B cell (primary cell): ENCODE measurements at regions of chr9 and their contacts with region 1.

Region 1: GRCh38 chr9:105694190-105694847 is at the start of gene TMEM38B:
- DNase-seq: peak; percentile 90
- ATAC-seq: peak; percentile 83
- H3K4me3 ChIP-seq: peak within 1 kb of the TSS; percentile 75 to 93 (median 82)
- H3K4me3 Mint-ChIP-seq: peak within 1 kb of the TSS; percentile 95
- H3K27ac ChIP-seq: peak within 1 kb of the TSS; percentile 58 to 77
- H3K27ac Mint-ChIP-seq: peak within 1 kb of the TSS; percentile 92
- H3K4me1 ChIP-seq: peaks cover 17 to 18% of the 10 kb centered on the region in 2 donors
- H3K4me1 Mint-ChIP-seq: peaks cover 19% of the 10 kb centered on the region
- H3K27me3 ChIP-seq: peaks cover 0 to 14% (median 11%) of the 10 kb centered on the region in 4 experiments
- H3K27me3 Mint-ChIP-seq: peaks cover 26% of the 10 kb centered on the region
- CTCF ChIP-seq: no peak
- total RNA-seq, gene TMEM38B: 29.6 and 35.2 TPM in 2 replicates

Region 2: GRCh38 chr9:105447814-105448812 is 246.2 kb before region 1 on chr9 and contains the start of gene FSD1L:
- CTCF ChIA-PET with region 1: no interaction called
- POLR2A ChIA-PET with region 1: no interaction called
- intact Hi-C with region 1: loop called (anchors 1 kb)
- DNase-seq: peak; percentile 90
- ATAC-seq: peak; percentile 91
- H3K4me3 ChIP-seq: peak within 1 kb of the TSS in 4 of 5 experiments; percentile 69 to 83 (median 74)
- H3K4me3 Mint-ChIP-seq: peak within 1 kb of the TSS; percentile 90
- H3K27ac ChIP-seq: peak within 1 kb of the TSS; percentile 21 to 24
- H3K27ac Mint-ChIP-seq: peak within 1 kb of the TSS; percentile 89
- H3K4me1 ChIP-seq: peaks cover 9 to 11% of the 10 kb centered on the region in 2 donors
- H3K4me1 Mint-ChIP-seq: peaks cover 17% of the 10 kb centered on the region
- H3K27me3 ChIP-seq: no peaks in the 10 kb centered on the region
- H3K27me3 Mint-ChIP-seq: no peaks in the 10 kb centered on the region
- CTCF ChIP-seq: no peak
- total RNA-seq, gene FSD1L: 9.8 and 15.2 TPM in 2 replicates

Region 3: DNA sequence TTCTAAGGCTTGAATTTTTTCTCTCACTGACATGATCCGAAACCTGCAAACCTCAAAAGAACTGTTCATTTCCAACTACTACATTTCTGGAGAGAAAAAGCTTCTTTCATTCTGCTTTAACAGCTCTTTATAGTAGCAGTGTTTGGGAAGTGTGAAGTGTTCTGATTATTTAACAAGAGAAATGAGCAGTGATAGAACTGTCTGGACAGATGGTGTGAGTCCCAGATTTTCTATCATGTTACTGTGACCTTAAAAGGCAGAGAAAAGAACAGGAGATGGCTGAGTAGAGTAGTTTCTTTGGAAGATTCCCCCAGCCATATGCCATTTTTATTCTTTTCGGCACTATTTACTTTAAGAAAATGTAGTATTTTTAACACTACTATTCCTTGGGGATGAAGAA is 73.3 kb before region 1 on chr9:
- CTCF ChIA-PET with region 1: no interaction called
- POLR2A ChIA-PET with region 1: no interaction called
- intact Hi-C with region 1: no loop called
- DNase-seq: no peak
- ATAC-seq: no peak
- H3K4me3 ChIP-seq: no peak overlapping the region
- H3K4me3 Mint-ChIP-seq: no peak overlapping the region
- H3K27ac ChIP-seq: no peak overlapping the region
- H3K27ac Mint-ChIP-seq: no peak overlapping the region
- H3K4me1 ChIP-seq: no peaks in the 10 kb centered on the region
- H3K4me1 Mint-ChIP-seq: no peaks in the 10 kb centered on the region
- H3K27me3 ChIP-seq: no peaks in the 10 kb centered on the region
- H3K27me3 Mint-ChIP-seq: no peaks in the 10 kb centered on the region
- CTCF ChIP-seq: no peak

Region 4: GRCh38 chr9:105656131-105656921 is 38.0 kb before region 1 on chr9:
- CTCF ChIA-PET with region 1: interaction called, 19 read pairs
- POLR2A ChIA-PET with region 1: interaction called, 6 read pairs
- intact Hi-C with region 1: loop called (anchors 1 kb)
- DNase-seq: peak; percentile 52
- ATAC-seq: peak; percentile 80
- H3K4me3 ChIP-seq: peak overlapping the region; percentile 53 to 69 (median 63)
- H3K4me3 Mint-ChIP-seq: peak overlapping the region; percentile 91
- H3K27ac ChIP-seq: no peak overlapping the region
- H3K27ac Mint-ChIP-seq: peak overlapping the region; percentile 57
- H3K4me1 ChIP-seq: peaks cover 20 to 24% of the 10 kb centered on the region in 2 donors
- H3K4me1 Mint-ChIP-seq: peaks cover 24% of the 10 kb centered on the region
- H3K27me3 ChIP-seq: peaks cover 0 to 32% (median 20%) of the 10 kb centered on the region in 4 experiments
- H3K27me3 Mint-ChIP-seq: peaks cover 24% of the 10 kb centered on the region
- CTCF ChIP-seq: peak; percentile 35

Region 5: DNA sequence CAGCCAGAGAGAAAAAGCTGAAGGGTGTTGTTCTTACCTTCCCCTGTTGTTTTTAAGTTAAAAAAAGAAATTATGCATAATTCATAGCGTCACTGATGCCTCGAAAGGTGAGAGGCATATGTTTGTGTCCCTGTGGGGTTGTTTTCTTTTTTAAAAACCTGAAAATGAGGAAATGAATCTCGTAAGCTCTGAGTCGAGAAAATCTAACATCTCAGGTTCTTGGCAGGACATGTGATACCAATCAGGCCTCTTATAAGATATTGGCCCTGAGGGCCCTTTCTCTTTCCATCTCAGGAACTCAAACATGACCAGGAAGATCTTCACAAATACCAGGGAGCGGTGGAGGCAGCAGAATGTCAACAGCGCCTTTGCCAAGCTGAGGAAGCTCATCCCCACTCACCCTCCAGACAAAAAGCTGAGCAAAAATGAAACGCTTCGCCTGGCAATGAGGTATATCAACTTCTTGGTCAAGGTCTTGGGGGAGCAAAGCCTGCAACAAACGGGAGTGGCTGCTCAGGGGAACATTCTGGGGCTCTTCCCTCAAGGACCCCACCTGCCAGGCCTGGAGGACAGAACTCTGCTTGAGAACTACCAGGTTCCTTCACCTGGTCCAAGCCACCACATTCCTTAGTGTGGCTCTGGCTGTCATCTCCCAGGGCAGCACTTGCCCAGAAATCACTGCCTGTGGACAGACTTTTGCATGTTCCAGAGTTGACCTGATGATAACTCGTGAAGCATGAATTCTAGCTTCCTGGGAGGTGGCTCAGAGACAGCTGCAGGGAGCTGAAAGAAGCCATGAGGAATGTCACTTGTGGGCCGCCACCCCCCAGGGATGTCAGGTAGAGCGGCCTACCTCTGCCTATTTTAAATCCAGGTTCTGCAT is 31.9 kb before region 1 on chr9 and contains the start of gene TAL2:
- CTCF ChIA-PET with region 1: interaction called, 19 read pairs
- POLR2A ChIA-PET with region 1: interaction called, 6 read pairs
- intact Hi-C with region 1: loop called (anchors 1 kb)
- DNase-seq: peak; percentile 78
- ATAC-seq: peak; percentile 91
- H3K4me3 ChIP-seq: peak within 1 kb of the TSS in 1 of 5 experiments; percentile 31
- H3K4me3 Mint-ChIP-seq: peak within 1 kb of the TSS; percentile 75
- H3K27ac ChIP-seq: peak within 1 kb of the TSS; percentile 70 to 80
- H3K27ac Mint-ChIP-seq: peak within 1 kb of the TSS; percentile 94
- H3K4me1 ChIP-seq: peaks cover 24% of the 10 kb centered on the region in 2 donors
- H3K4me1 Mint-ChIP-seq: peaks cover 31% of the 10 kb centered on the region
- H3K27me3 ChIP-seq: peaks cover 0 to 10% (median 8%) of the 10 kb centered on the region in 4 experiments
- H3K27me3 Mint-ChIP-seq: peaks cover 11% of the 10 kb centered on the region
- CTCF ChIP-seq: no peak
- total RNA-seq, gene TAL2: 6.7 and 7.0 TPM in 2 replicates

Region 6: GRCh38 chr9:105822814-105823213 is 128.5 kb after region 1 on chr9:
- CTCF ChIA-PET with region 1: no interaction called
- POLR2A ChIA-PET with region 1: no interaction called
- intact Hi-C with region 1: no loop called
- DNase-seq: no peak
- ATAC-seq: no peak
- H3K4me3 ChIP-seq: no peak overlapping the region
- H3K4me3 Mint-ChIP-seq: no peak overlapping the region
- H3K27ac ChIP-seq: no peak overlapping the region
- H3K27ac Mint-ChIP-seq: no peak overlapping the region
- H3K4me1 ChIP-seq: no peaks in the 10 kb centered on the region
- H3K4me1 Mint-ChIP-seq: no peaks in the 10 kb centered on the region
- H3K27me3 ChIP-seq: peaks cover 0 to 2% (median 0%) of the 10 kb centered on the region in 4 experiments
- H3K27me3 Mint-ChIP-seq: no peaks in the 10 kb centered on the region
- CTCF ChIP-seq: no peak